ENCODE measurements at regions of chr17 and their contacts with region 1.

Region 1: GRCh38 chr17:81401723-81402529 is 6.7 kb downstream of the BAHCC1 start:
- DNase-seq: peak; percentile 51

Region 2: GRCh38 chr17:81453712-81454111 is 51.8 kb after region 1 on chr17:
- in situ Hi-C with region 1: loop called (anchors 10 kb)
- DNase-seq: no peak

Region 3: GRCh38 chr17:81484195-81484979 is 82.5 kb after region 1 on chr17:
- in situ Hi-C with region 1: no loop called
- DNase-seq: peak; percentile 87

Region 4: DNA sequence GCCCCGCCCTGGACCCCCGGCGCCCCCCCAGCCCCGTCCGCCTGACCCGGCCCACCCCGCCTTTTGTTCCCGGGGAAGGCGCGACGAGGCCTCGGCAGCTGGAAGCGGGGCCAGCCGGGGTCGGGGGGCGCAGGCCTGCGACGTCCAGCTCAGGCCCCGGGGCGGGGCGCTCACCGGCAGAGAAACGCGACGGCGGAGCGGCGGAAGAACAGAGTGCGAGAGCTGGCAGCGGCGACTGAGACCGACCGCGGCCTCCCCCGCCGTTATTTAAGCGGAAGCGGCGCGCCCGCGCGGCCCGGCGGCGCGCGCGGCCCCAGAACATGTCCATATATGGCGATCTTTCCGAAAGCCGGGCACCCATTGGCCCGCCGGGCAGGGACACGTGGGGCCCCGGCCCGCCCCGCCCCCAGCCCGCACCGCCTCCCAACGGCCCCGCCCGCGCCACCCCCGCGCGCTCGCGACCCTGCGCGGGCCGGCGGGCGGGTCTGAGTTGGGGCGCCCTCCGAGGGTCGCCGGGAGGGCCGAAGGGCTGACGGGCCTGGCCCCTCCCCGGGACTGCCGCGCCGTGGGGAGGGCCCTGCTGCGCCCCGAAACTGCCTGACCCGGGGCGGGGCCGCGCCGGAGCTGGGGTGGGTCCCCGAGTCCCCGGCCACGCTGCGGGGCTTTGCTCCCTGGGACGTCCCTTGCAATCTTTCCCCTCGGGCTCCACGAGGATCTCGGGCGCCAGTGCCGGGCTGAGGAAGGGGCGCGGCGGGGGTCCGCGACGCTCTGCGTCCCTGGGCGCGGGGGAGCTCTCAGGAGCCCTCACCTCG is 110.8 kb after region 1 on chr17 and contains the start of gene ACTG1:
- in situ Hi-C with region 1: loop called (anchors 10 kb)
- DNase-seq: peak; percentile 92
- total RNA-seq, gene ACTG1: 5,595 and 6,819 TPM in 2 replicates

Region 5: GRCh38 chr17:82022981-82023374 is 621.1 kb after region 1 on chr17 and contains the start of gene LRRC45:
- in situ Hi-C with region 1: no loop called
- DNase-seq: peak; percentile 100
- total RNA-seq, gene LRRC45: 21.2 and 25.1 TPM in 2 replicates